CD8-positive, alpha-beta T cell (primary cell): ENCODE measurements at regions of chr6 and their contacts with region 1.

Region 1: DNA sequence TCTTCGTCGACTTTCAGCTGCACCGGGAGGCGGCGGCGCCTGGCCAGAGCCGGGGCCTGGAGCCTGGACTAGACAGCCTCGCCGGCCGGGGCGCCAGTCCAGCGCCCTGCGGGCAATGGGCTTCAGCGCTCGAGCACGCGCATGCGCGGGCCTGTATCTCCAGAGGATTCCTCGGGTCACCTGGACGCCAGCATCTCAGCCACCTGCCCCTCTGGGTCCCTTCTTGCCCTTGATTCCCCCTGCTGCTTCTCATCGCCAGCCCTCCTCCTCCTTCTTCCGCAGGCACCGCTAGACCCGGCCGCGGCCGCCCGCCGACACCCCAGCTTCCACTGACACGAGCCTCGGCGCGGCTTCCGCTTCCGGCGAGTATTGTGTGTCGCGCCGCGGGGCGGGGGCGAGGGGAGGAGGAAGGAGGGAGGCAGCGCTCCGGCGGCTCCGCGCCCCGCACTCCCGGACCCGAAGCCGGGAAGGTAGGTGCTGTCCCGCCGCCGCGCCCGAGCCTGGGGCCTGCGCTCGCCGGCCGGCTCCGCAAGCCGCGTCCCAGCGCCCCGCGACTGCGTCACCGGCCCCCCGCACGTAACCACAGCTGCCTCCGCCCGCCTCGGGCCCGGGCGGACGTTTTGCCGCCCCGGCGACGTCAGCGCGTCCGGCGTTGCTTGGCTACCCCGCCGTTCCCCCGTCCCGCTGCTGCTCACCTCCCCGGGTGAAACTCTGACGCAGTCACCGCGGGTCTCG is at the start of gene TRIM39:
- DNase-seq: peak; percentile 75 to 97 (median 90)
- ATAC-seq: peak; percentile 58
- H3K4me3 ChIP-seq: peak within 1 kb of the TSS; percentile 74 to 87
- H3K4me3 Mint-ChIP-seq: peak within 1 kb of the TSS; percentile 96
- H3K27ac ChIP-seq: peak within 1 kb of the TSS; percentile 95 to 99
- H3K27ac Mint-ChIP-seq: peak within 1 kb of the TSS; percentile 98
- H3K4me1 ChIP-seq: peaks cover 41% of the 10 kb centered on the region
- H3K4me1 Mint-ChIP-seq: peaks cover 59% of the 10 kb centered on the region
- H3K27me3 ChIP-seq: no peaks in the 10 kb centered on the region
- H3K27me3 Mint-ChIP-seq: no peaks in the 10 kb centered on the region
- CTCF ChIP-seq: no peak
- total RNA-seq, gene TRIM39: 50.7 to 58.5 TPM

Region 2: GRCh38 chr6:30200551-30201281 is 126.0 kb before region 1 on chr6:
- CTCF ChIA-PET with region 1: no interaction called
- POLR2A ChIA-PET with region 1: no interaction called
- intact Hi-C with region 1: no loop called
- DNase-seq: no peak
- ATAC-seq: no peak
- H3K4me3 ChIP-seq: no peak overlapping the region
- H3K4me3 Mint-ChIP-seq: no peak overlapping the region
- H3K27ac ChIP-seq: no peak overlapping the region
- H3K27ac Mint-ChIP-seq: peak overlapping the region; percentile 71
- H3K4me1 ChIP-seq: peaks cover under 1% of the 10 kb centered on the region
- H3K4me1 Mint-ChIP-seq: peaks cover 37% of the 10 kb centered on the region
- H3K27me3 ChIP-seq: no peaks in the 10 kb centered on the region
- H3K27me3 Mint-ChIP-seq: no peaks in the 10 kb centered on the region
- CTCF ChIP-seq: no peak

Region 3: DNA sequence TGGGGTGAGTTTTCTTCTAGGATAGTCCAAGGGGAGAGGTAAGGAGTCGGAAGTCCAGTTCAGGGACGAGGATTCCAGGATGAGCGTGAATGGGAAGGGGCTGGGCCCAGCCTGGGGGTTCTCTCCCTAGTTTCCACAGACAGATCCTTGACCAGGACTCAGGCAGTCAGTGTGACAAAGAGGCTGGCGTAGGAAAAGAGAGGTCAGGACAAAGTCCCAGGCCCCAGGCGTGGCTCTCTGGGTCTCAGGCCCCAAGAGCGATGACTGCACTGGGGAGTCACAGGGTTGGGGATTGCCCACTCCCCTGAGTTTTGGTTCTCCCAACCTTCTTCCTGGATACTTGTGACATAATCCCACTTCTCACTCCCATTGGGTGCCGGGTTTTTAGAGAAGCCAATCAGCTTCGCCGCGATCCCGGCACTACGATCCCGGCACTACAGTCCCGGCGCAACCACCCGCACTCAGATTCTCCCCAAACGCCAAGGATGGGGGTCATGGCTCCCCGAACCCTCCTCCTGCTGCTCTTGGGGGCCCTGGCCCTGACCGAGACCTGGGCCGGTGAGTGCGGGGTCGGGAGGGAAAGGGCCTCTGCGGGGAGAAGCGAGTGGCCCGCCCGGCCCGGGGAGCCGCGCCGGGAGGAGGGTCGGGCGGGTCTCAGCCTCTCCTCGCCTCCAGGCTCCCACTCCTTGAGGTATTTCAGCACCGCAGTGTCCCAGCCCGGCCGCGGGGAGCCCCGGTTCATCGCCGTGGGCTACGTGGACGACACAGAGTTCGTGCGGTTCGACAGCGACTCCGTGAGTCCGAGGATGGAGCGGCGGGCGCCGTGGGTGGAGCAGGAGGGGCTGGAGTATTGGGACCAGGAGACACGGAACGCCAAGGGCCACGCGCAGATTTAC is 67.3 kb before region 1 on chr6:
- CTCF ChIA-PET with region 1: no interaction called
- POLR2A ChIA-PET with region 1: no interaction called
- intact Hi-C with region 1: loop called in 1 of 2 experiments (anchors 2 kb)
- DNase-seq: peak; percentile 24 to 91 (median 60)
- ATAC-seq: peak; percentile 84
- H3K4me3 ChIP-seq: peak overlapping the region; percentile 78 to 88
- H3K4me3 Mint-ChIP-seq: peak overlapping the region; percentile 92
- H3K27ac ChIP-seq: peak overlapping the region; percentile 53 to 77
- H3K27ac Mint-ChIP-seq: peak overlapping the region; percentile 80
- H3K4me1 ChIP-seq: peaks cover 6% of the 10 kb centered on the region
- H3K4me1 Mint-ChIP-seq: peaks cover 19% of the 10 kb centered on the region
- H3K27me3 ChIP-seq: no peaks in the 10 kb centered on the region
- H3K27me3 Mint-ChIP-seq: no peaks in the 10 kb centered on the region
- CTCF ChIP-seq: peak; percentile 23

Region 4: DNA sequence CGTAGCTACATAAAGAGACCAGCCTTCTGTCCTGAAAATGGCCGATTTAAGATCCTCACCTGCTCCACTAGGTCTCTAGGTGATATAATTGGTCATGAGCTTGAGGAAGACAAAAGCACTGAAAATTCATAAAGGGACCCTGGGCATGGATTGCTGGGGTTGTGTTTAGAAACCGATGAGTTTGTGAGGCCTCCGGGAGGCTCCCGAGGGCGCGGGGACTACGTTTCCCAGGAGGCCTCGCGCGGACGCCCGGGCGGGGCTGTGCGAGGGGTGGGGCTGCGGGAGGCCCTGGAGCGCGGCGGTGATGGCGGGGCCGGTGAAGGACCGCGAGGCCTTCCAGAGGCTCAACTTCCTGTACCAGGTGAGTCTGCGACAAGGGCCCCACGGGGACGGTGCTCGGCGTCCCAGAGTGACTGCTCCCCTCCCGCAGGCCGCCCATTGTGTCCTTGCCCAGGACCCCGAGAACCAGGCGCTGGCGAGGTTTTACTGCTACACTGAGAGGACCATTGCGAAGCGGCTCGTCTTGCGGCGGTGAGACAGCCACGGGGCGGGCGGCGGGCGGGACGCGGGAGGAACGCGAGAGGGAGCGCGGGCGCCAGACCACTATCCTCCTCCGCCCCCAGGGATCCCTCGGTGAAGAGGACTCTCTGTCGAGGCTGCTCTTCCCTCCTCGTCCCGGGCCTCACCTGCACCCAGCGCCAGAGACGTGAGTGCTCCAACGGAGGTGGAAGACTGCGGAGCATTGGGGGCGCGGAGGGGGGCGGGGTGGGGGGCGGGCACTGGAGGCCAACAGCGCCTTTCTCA is 18.4 kb after region 1 on chr6 and contains the start of gene RPP21:
- CTCF ChIA-PET with region 1: interaction called, 4 read pairs
- POLR2A ChIA-PET with region 1: interaction called, 15 read pairs
- intact Hi-C with region 1: loop called (anchors 1 kb)
- DNase-seq: peak; percentile 70 to 92 (median 85)
- ATAC-seq: peak; percentile 98
- H3K4me3 ChIP-seq: peak within 1 kb of the TSS; percentile 80 to 86
- H3K4me3 Mint-ChIP-seq: peak within 1 kb of the TSS; percentile 93
- H3K27ac ChIP-seq: peak within 1 kb of the TSS; percentile 85 to 86
- H3K27ac Mint-ChIP-seq: peak within 1 kb of the TSS; percentile 96
- H3K4me1 ChIP-seq: peaks cover 11% of the 10 kb centered on the region
- H3K4me1 Mint-ChIP-seq: peaks cover 23% of the 10 kb centered on the region
- H3K27me3 ChIP-seq: no peaks in the 10 kb centered on the region
- H3K27me3 Mint-ChIP-seq: no peaks in the 10 kb centered on the region
- CTCF ChIP-seq: no peak
- total RNA-seq, gene RPP21: 51.0 to 52.4 TPM

Region 5: GRCh38 chr6:30571075-30571768 is 244.5 kb after region 1 on chr6 and contains the start of gene ABCF1:
- CTCF ChIA-PET with region 1: no interaction called
- POLR2A ChIA-PET with region 1: interaction called, 3 read pairs
- intact Hi-C with region 1: loop called in 1 of 2 experiments (anchors 2 kb)
- DNase-seq: peak; percentile 99 to 100 (median 100)
- ATAC-seq: peak; percentile 96
- H3K4me3 ChIP-seq: peak within 1 kb of the TSS; percentile 64 to 86
- H3K4me3 Mint-ChIP-seq: peak within 1 kb of the TSS; percentile 98
- H3K27ac ChIP-seq: peak within 1 kb of the TSS; percentile 90 to 98
- H3K27ac Mint-ChIP-seq: peak within 1 kb of the TSS; percentile 99
- H3K4me1 ChIP-seq: peaks cover 54% of the 10 kb centered on the region
- H3K4me1 Mint-ChIP-seq: peaks cover 69% of the 10 kb centered on the region
- H3K27me3 ChIP-seq: no peaks in the 10 kb centered on the region
- H3K27me3 Mint-ChIP-seq: no peaks in the 10 kb centered on the region
- CTCF ChIP-seq: no peak
- total RNA-seq, gene ABCF1: 121 to 130 TPM